H1 (cell line): ENCODE measurements at regions of chr3 and their contacts with region 1.

Region 1: DNA sequence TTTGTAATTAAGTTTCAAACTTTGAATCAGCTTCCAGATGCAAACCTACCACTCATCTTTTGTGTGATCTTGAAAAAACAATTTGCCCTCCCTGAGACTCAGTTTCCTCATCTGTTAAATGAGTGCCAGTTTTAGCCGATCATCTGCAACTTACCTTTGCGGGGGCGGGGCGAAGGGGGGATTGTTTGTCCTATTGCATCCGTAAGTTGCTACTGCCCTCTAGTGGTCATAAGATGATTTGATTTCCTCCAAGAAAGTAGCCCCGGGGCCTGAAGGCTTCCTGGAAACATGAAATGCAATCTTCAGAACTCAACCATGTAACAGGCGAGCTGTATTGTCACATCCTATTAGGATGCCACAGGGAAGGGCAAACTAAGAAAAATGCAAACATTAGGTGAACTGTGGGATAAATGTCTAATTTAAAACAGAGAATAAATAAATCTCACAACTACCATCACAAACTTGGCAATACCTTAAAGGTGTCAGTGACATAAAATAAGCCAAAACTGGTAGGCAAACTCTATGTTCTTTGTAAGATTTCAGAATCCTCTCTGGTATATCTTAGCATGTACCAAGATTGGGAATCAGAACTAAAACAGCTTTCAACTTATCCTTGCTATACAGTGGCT is 63.5 kb upstream of the CLDN18 start:
- DNase-seq: peak; percentile 41 to 67
- H3K4me3 ChIP-seq: no peak overlapping the region
- H3K27ac ChIP-seq: no peak overlapping the region
- H3K4me1 ChIP-seq: peaks cover 0 to 10% (median 0%) of the 10 kb centered on the region in 4 experiments; a peak in 1 of 7 replicates
- H3K27me3 ChIP-seq: peaks cover 0 to 5% (median under 1%) of the 10 kb centered on the region in 4 experiments; a peak in 4 of 7 replicates
- CTCF ChIP-seq: peak; percentile 31 to 79 (median 73)
- EP300 ChIP-seq: no peak
- POLR2A ChIP-seq: no peak
- RAD21 ChIP-seq: peak; percentile 97 to 98

Region 2: DNA sequence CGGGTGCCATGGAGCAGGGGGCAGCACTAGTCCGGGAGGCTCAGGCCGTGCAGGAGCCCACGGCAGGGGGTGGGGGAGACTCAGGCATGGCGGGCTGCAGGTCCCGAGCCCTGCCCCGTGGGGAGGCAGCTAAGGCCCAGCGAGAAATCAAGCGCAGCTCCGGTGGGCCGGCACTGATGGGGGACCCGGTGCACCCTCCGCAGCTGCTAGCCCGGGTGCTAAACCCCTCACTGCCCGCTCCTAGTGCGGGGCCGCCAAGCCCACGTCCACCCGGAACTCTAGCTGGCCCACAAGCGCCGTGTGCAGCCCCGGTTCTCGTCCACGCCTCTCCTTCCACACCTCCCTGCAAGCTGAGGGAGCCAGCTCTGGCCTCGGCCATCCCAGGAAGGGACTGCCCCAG is 231.9 kb before region 1 on chr3:
- CTCF ChIA-PET with region 1: interaction called, 44 read pairs
- POLR2A ChIA-PET with region 1: no interaction called
- DNase-seq: no peak
- H3K4me3 ChIP-seq: no peak overlapping the region
- H3K27ac ChIP-seq: no peak overlapping the region
- H3K4me1 ChIP-seq: no peaks in the 10 kb centered on the region
- H3K27me3 ChIP-seq: no peaks in the 10 kb centered on the region
- CTCF ChIP-seq: no peak
- EP300 ChIP-seq: no peak
- POLR2A ChIP-seq: no peak
- RAD21 ChIP-seq: no peak

Region 3: DNA sequence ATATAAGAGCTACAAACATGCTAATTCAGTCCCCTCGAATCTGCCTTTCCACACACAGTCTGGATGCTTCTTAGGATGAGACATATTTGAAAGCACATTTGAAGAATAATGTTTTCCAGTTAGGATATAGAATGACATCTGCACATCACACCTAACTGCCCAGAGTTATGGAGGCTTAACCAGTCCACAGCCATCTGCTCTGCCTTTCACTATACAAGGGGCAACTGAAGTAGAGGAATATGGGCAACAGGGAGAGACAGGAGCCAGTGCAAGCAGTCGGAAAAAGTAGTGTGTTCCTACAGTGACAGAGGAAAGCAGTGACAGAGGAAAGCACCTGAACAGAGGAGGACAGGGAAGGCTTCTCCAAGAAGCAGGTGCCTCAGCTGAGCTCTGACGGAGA is 15.5 kb before region 1 on chr3:
- CTCF ChIA-PET with region 1: interaction called, 12 read pairs
- POLR2A ChIA-PET with region 1: no interaction called
- DNase-seq: no peak
- H3K4me3 ChIP-seq: no peak overlapping the region
- H3K27ac ChIP-seq: no peak overlapping the region
- H3K4me1 ChIP-seq: no peaks in the 10 kb centered on the region
- H3K27me3 ChIP-seq: no peaks in the 10 kb centered on the region
- CTCF ChIP-seq: no peak
- EP300 ChIP-seq: no peak
- POLR2A ChIP-seq: no peak
- RAD21 ChIP-seq: no peak

Region 4: DNA sequence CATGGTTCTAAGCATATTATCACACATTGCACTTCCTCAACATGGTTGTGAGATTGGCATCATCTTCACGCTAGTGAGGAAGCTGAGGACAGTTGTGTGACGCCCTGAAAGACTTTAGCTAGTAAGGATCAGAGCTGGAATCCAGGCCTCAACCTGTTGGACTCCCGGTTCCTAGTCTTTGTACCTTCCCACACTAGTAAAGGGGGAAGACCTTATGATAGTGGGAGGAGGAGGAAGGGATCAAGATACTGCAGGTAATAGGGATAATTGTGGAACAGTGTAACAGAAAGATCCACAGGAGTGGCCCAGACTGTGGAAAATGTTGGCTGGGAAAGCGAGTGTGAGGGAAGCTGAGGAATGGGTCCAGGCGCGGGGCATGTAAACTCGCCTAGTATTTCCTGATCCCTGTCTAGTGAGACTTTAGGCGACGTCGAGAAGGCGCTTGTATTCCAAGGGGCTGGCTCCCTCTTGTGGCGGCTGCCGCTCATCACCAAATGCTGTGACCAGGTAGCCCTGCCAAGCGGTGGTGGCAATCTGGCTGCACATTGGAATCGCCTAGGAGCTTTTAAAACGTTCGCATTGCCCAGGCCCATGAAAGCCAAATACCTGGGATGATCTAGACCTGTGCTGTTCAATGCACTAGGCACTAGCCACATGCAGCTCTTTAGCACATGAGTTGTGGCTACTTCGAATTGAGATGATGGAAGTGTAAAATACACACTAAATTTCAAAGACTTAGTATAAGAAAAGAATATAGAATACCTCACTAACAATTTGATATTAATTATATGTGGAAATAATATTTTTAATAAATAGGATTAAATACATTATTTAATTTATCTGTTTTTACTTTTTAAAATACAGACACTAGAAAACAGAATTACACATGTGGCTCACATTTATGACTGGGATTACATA is 24.7 kb after region 1 on chr3:
- CTCF ChIA-PET with region 1: interaction called, 17 read pairs
- POLR2A ChIA-PET with region 1: no interaction called
- DNase-seq: peak; percentile 73 to 93
- H3K4me3 ChIP-seq: no peak overlapping the region
- H3K27ac ChIP-seq: no peak overlapping the region
- H3K4me1 ChIP-seq: no peaks in the 10 kb centered on the region
- H3K27me3 ChIP-seq: no peaks in the 10 kb centered on the region; a peak in 1 of 7 replicates
- CTCF ChIP-seq: peak; percentile 90 to 95 (median 92)
- EP300 ChIP-seq: no peak
- POLR2A ChIP-seq: no peak
- RAD21 ChIP-seq: peak; percentile 95 to 97

Region 5: GRCh38 chr3:138078901-138079344 is 132.5 kb after region 1 on chr3:
- CTCF ChIA-PET with region 1: no interaction called
- POLR2A ChIA-PET with region 1: no interaction called
- DNase-seq: no peak
- H3K4me3 ChIP-seq: no peak overlapping the region
- H3K27ac ChIP-seq: no peak overlapping the region
- H3K4me1 ChIP-seq: no peaks in the 10 kb centered on the region
- H3K27me3 ChIP-seq: no peaks in the 10 kb centered on the region
- CTCF ChIP-seq: no peak
- EP300 ChIP-seq: no peak
- POLR2A ChIP-seq: no peak
- RAD21 ChIP-seq: no peak